Right ventricle myocardium inferior (tissue), 1 donor: ENCODE measurements at regions of chr11 and their contacts with region 1.

Region 1: DNA sequence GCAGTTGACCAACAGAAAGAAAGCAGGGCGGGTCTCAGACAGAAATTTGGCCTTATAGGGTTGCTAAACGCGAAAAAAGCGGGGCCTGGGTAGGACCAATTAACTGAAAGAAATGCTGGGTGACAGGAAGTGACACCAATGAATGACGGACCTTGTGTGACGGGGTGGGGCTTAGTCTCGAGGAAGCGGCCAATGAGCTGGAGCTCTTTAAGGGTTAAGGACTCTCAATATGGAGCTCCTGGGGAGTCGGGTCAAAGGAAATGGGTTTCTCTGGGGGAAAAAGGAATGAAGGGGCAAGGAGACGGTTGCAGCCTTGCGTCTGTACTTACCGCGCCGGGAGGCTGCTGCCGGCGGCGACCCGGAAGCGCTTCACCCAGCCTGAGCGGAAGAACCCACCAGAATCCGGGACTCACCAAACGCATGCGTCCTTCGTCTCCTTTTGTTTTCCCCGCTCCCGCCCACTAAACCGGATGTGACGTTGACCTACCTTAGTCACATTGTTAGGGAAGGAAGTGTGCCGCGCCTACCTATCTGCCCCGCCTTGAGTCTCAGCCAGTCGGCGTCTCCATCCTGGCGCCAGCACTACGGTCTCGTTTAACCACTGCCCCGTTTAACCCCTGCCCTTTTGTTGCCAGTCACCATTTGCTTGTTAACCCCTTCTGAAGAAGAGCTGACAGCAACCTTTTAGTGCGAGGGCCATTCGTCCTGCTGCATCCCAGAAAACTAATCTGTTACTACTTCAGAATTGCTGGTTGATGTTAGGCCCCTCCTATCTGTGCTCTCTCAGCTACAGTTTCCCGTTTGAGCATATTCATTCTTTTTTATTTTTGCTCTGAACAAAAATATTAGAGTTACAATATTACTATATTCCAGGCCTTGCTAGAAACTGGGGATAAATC is at the start of gene ANAPC15:
- DNase-seq: peak; percentile 98
- ATAC-seq: peak; percentile 94
- total RNA-seq, gene ANAPC15: 46.1 TPM

Region 2: GRCh38 chr11:71934213-71934612 is 178.4 kb before region 1 on chr11:
- intact Hi-C with region 1: loop called (anchors 5 kb)
- DNase-seq: no peak
- ATAC-seq: no peak

Region 3: DNA sequence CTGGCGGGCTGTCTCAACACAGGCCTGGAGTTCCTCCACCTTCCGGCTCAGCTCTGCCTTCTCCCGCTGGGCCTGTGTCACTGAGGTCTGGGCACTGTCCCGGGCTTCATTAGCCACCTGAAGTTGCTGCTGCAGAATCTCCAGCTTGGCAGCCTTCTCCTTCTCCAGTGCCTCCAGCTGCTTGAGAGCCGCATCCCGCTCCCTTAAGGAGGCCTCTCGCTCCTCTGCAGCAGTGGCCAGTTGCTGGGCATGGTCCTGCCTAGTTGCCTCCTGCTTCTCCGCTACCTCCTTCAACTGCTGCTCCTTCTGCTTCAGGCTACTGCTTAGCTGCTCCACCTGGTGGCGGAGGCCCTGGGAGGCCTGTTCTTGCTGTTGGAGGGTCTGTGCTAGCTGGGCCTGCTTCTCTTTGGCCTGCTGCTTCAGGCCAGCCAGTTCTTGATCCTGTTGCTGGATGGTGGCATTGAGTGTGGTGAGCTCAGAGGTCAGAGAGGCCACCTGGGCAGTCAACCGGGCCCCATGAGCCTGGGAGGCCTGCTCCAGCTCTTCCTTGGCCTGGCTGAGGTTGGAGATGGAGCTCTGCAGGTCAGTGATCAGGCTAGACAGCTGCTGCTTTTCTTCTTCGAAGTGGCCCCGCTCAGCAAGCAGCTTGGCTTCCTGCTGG is 96.9 kb before region 1 on chr11:
- intact Hi-C with region 1: no loop called
- DNase-seq: no peak
- ATAC-seq: no peak

Region 4: GRCh38 chr11:72048766-72049456 is 63.7 kb before region 1 on chr11:
- intact Hi-C with region 1: no loop called
- DNase-seq: no peak
- ATAC-seq: no peak

Region 5: DNA sequence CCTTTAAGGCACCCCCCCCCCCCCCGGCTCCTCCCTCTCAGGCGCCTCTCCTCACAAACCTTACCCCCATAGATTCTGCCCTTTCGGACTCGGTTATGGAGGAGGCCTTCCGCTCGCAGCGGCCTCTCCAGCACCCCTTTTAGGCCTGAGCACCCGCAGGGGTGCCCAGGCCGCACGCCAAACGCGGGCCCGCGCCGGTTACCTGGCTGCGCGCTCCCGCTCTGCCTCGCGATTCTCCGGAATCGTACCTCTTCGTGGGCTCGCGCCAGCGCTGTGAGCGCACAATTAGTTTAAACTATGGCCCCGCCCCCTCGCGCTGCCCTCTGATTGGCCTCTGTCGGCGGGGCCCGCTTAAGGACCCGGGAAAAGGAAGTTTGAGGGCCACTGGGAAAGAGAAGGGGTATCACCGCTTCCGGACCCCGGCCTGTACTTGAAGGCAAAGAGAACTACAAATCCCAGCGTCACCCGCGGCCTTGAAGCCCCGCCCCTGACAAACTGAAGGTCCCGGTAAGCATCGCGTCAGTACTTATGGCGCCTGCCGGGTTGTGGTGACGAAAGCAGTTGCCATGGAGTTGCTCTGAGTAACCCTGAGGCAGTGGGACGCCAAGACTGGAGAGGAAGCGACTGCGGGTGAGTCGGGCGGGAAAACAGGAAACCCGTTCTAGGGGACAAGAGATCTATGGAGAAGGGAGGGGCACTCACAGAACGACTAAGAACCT is 32.2 kb before region 1 on chr11 and contains the starts of genes LRRC51 and NUMA1:
- intact Hi-C with region 1: loop called (anchors 1 kb)
- DNase-seq: peak; percentile 100
- ATAC-seq: peak; percentile 98
- total RNA-seq, gene LRRC51: 3.7 TPM
- total RNA-seq, gene NUMA1: 81.3 TPM